HEK293 (cell line): ENCODE measurements at regions of chr3 and their contacts with region 1.

Region 1: DNA sequence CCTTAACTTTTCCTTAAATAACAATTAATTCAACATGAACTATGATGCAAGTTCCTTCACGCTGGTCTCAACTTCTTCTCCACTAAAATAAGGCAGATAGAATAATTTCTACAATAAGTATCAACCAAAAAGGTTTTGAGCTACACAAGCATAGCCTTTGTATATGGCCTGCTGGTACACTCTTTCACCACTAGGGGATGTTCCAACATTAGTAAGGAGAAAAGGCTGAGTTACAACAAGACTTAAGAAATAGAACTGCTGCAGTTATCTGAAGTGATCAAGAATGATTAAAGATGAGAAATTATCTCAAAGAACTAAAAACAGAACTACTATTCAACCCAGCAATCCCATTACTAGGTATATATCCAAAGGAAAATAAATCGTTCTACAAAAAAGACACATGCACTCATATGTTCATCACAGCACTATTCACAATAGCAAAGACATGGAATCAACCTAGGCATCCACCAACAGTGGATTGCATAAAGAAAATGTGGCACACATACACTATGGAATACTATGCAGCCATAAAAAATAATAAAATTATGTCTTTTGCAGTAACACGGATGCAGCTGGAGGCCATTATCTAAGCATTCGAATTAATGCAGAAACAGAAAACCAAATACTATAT is 14.4 kb downstream of the ATP13A3 start:
- H3K4me3 ChIP-seq: no peak overlapping the region
- H3K27ac ChIP-seq: no peak overlapping the region
- H3K4me1 ChIP-seq: peaks cover 7% of the 10 kb centered on the region; the same call in 1 of the 2 replicates
- CTCF ChIP-seq: no peak

Region 2: GRCh38 chr3:194486540-194487288 is 14.3 kb after region 1 on chr3 and contains the start of gene ATP13A3:
- CTCF ChIA-PET with region 1: interaction called, 25 read pairs
- POLR2A ChIA-PET with region 1: interaction called, 3 read pairs
- H3K4me3 ChIP-seq: peak within 1 kb of the TSS; percentile 80
- H3K27ac ChIP-seq: peak within 1 kb of the TSS; percentile 60; the same call in 1 of the 2 replicates
- H3K4me1 ChIP-seq: no peaks in the 10 kb centered on the region
- CTCF ChIP-seq: no peak

Region 3: GRCh38 chr3:194497821-194498598 is 25.6 kb after region 1 on chr3:
- CTCF ChIA-PET with region 1: no interaction called
- POLR2A ChIA-PET with region 1: no interaction called
- H3K4me3 ChIP-seq: no peak overlapping the region
- H3K27ac ChIP-seq: no peak overlapping the region
- H3K4me1 ChIP-seq: 0 out of 2 replicates have a peak, but pooled peaks cover 2% of the 10 kb centered on the region
- CTCF ChIP-seq: no peak

Region 4: GRCh38 chr3:194573691-194574437 is 101.5 kb after region 1 on chr3:
- CTCF ChIA-PET with region 1: interaction called, 49 read pairs
- POLR2A ChIA-PET with region 1: interaction called, 5 read pairs
- H3K4me3 ChIP-seq: no peak overlapping the region
- H3K27ac ChIP-seq: no peak overlapping the region
- H3K4me1 ChIP-seq: no peaks in the 10 kb centered on the region
- CTCF ChIP-seq: no peak; the same call in 1 of the 2 replicates

Region 5: GRCh38 chr3:194592798-194593752 is 120.7 kb after region 1 on chr3:
- CTCF ChIA-PET with region 1: interaction called, 15 read pairs
- POLR2A ChIA-PET with region 1: no interaction called
- H3K4me3 ChIP-seq: no peak overlapping the region
- H3K27ac ChIP-seq: no peak overlapping the region
- H3K4me1 ChIP-seq: no peaks in the 10 kb centered on the region
- CTCF ChIP-seq: no peak